Caco-2 (cell line): ENCODE measurements at regions of chr3 and their contacts with region 1.

Region 1: DNA sequence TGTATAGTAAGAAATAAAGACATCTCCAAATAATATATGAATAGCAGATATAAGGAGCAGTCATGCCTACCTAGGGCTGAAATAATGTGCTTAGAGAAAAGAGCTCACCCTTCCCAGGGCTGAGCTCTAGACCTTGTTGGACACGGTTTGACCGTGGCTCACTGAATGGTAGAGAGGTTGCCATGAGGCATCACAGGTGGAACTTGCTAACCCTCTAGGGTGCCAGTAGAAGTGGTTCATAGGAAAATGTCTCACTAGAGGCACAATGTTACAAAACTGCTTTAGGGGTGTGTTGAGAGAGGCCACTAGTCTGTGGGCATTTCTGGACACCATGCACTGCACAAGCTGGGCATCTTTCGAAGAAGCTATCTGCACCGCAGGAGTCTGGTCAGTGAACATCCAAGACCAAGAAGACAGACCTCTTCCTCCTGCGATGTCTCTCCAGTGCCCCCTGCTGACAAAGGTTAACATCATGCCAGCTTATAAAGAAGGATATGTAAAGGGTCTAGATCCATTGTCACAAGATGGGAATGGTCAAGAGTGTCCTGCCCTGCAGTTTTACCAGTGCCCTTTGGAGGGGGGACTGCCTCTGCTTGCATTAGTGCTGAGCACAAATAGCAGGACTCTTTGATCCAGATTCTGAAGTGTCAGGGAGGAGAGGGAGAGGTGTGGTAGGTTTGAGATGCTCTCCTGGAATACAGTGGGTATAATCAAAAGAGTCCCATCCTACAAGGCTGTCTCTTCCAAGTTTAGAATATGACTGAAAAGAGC is 266.8 kb downstream of the ZNF385D start:
- DNase-seq: peak; percentile 43 to 57
- H3K4me3 ChIP-seq: no peak overlapping the region
- H3K4me3 Mint-ChIP-seq: no peak overlapping the region
- H3K27ac Mint-ChIP-seq: no peak overlapping the region
- H3K4me1 ChIP-seq: no peaks in the 10 kb centered on the region
- H3K4me1 Mint-ChIP-seq: no peaks in the 10 kb centered on the region
- H3K27me3 ChIP-seq: no peaks in the 10 kb centered on the region
- H3K27me3 Mint-ChIP-seq: no peaks in the 10 kb centered on the region
- CTCF ChIP-seq: peak; percentile 48 to 64

Region 2: DNA sequence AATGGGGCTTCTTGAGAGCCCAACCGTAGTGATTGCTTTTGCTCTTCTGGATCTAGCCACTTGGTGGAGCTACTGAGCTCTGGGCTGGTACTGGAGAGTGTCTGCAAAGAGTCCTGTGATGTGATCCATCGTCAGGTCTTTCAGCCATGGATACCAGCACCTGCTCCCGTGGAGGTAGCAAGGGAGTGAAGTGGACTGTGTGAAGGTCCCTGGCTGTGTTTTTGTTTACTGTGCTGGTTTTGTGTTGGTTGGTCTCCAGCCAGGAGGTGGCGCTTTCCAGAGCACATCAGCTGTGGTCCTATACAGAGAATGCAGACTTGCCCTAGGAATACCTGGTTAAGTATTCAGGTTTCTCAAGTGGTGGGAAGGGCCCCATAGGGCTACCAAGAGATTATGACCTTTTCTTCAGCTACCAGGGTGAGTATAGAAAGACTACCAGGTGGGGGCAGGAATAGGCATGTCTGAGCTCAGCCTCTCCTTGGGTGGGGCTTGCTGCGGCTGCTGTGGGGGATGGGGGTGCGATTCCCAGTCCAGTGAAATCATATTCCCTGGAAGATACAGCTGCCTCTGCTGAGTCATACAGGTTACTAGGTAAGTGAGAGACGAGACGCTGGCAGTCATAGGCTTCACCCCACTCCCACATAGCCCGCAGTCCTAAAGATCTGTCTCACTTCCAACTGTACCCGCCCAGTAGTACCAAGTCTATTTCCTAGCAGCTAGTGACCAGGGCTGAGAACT is 467.0 kb before region 1 on chr3:
- CTCF ChIA-PET with region 1: no interaction called
- POLR2A ChIA-PET with region 1: no interaction called
- intact Hi-C with region 1: loop called (anchors 1 kb)
- DNase-seq: peak; percentile 6 to 26
- H3K4me3 ChIP-seq: no peak overlapping the region
- H3K4me3 Mint-ChIP-seq: no peak overlapping the region
- H3K27ac Mint-ChIP-seq: no peak overlapping the region
- H3K4me1 ChIP-seq: no peaks in the 10 kb centered on the region
- H3K4me1 Mint-ChIP-seq: no peaks in the 10 kb centered on the region
- H3K27me3 ChIP-seq: no peaks in the 10 kb centered on the region
- H3K27me3 Mint-ChIP-seq: no peaks in the 10 kb centered on the region
- CTCF ChIP-seq: peak in 1 of 2 experiments; percentile 26